Activated CD4-positive, alpha-beta T cell treated with anti-CD3 and anti-CD28 coated beads, Interleukin-2, amount 10 ng/mL, durations not matched to agents 24 days and 14 days (primary cell): ENCODE measurements at regions of chr2 and their contacts with region 1.

Region 1: DNA sequence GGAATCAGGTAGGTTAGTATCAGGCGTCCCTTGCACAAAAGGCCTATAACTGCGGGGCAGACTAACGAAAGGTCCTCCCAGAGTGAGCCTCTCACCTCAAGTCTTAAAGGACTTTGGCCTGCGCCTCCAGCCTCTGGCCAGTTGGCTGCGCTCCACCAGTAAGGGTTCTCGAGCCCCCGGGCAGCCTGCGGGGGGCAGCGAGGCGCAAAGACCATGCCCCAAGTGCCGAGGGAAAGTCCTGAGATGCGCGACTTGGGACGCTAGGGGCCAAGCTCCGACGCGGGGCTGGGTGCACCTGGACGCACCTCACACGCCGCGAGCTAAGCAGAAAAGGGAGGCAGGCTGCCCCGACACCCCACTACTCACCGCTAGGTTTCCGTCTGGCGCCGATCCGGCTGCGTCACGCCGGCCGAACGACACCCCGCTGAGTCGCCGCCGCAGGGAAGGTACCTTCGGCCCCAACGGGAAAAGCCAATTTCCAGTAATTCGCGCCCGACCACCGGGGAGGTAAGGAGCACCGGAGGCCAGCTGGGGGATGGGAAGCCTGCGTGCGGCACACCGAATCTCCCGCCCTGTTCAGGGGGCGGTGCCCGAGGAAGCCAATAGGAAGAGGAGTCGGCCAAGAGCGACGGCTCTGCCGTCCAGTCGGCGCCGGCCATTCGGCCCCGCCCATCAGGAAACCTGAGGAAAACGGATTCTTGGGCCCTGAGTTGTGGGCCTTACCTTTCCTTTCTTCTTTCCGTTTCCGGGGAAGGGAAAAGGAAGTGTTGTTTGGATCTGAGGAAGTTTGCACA is at the start of gene ORC2:
- DNase-seq: peak; percentile 99
- H3K4me3 Mint-ChIP-seq: peak within 1 kb of the TSS; percentile 90
- H3K27ac Mint-ChIP-seq: peak within 1 kb of the TSS; percentile 96
- H3K4me1 Mint-ChIP-seq: peaks cover 45% of the 10 kb centered on the region
- H3K27me3 Mint-ChIP-seq: no peaks in the 10 kb centered on the region
- total RNA-seq, gene ORC2: 64.2 and 66.5 TPM in 2 replicates

Region 2: GRCh38 chr2:200901459-200902072 is 61.8 kb before region 1 on chr2:
- intact Hi-C with region 1: loop called (anchors 2 kb)
- DNase-seq: peak; percentile 92
- H3K4me3 Mint-ChIP-seq: no peak overlapping the region
- H3K27ac Mint-ChIP-seq: peak overlapping the region; percentile 61
- H3K4me1 Mint-ChIP-seq: peaks cover 19% of the 10 kb centered on the region
- H3K27me3 Mint-ChIP-seq: no peaks in the 10 kb centered on the region

Region 3: DNA sequence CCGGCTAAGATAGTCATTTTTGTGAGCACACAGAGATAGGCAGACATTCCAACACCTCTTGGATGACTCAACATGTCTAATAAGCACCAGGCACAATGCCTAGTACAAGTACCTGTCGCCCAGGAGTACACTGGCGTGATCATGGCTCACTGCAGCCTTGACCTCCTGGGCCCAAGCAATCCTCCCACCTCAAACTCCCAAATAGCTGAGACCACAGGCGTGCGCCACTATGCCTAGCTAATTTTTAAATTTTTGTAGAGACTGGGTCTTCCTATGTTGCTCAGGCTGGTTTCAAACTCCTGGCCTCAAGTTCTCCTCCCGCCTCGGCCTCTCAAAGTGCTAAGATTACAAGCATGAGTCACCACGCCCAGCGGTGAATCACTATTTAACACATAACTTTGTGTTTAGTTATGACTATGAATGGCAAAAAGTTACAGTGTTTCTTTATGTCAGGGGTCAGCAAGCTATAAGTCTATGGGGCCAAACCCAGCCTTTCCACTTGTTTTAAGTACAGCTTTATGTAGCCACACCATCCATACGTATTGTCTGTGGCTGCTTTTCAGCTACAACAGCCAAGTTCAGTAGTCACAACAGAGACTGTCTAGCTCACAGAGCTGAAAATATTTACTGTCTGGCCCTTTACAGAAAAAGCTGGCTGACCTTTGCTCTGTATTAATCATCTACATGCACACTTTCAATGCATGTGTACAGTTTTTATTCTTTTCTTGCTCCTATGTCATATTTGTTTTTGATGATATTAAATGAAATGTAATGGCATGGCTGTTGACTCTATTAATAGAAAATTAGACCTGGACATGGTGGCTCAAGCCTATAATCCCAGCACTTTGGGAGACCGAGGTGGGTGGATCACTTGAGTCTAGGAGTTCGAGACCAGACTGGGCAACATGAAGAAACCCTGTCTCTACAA is 18.6 kb before region 1 on chr2:
- intact Hi-C with region 1: loop called (anchors 2 kb)
- DNase-seq: peak; percentile 67
- H3K4me3 Mint-ChIP-seq: no peak overlapping the region
- H3K27ac Mint-ChIP-seq: peak overlapping the region; percentile 78
- H3K4me1 Mint-ChIP-seq: peaks cover 20% of the 10 kb centered on the region
- H3K27me3 Mint-ChIP-seq: no peaks in the 10 kb centered on the region

Region 4: DNA sequence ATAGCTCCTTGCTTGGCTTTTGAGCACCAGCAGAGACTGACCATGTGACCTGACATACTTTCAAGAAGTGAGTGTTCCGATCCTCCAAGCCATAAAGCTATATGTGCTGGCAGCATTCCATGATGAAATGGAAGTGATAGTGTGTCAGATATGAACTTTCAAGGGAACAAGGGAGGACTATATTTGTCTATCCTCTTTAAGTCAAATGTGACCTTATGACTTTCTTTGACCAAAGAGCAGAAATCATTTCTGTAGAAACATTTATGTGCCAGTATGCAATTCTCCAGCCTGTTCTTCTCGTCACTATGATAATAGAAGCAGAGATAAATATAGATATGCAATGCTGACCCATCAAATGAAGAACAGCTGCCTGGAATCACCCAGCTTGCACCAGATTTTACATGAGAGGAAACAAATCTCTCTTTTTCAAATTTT is 93.8 kb after region 1 on chr2:
- intact Hi-C with region 1: no loop called
- DNase-seq: no peak
- H3K4me3 Mint-ChIP-seq: no peak overlapping the region
- H3K27ac Mint-ChIP-seq: no peak overlapping the region
- H3K4me1 Mint-ChIP-seq: peaks cover 17% of the 10 kb centered on the region
- H3K27me3 Mint-ChIP-seq: no peaks in the 10 kb centered on the region

Region 5: DNA sequence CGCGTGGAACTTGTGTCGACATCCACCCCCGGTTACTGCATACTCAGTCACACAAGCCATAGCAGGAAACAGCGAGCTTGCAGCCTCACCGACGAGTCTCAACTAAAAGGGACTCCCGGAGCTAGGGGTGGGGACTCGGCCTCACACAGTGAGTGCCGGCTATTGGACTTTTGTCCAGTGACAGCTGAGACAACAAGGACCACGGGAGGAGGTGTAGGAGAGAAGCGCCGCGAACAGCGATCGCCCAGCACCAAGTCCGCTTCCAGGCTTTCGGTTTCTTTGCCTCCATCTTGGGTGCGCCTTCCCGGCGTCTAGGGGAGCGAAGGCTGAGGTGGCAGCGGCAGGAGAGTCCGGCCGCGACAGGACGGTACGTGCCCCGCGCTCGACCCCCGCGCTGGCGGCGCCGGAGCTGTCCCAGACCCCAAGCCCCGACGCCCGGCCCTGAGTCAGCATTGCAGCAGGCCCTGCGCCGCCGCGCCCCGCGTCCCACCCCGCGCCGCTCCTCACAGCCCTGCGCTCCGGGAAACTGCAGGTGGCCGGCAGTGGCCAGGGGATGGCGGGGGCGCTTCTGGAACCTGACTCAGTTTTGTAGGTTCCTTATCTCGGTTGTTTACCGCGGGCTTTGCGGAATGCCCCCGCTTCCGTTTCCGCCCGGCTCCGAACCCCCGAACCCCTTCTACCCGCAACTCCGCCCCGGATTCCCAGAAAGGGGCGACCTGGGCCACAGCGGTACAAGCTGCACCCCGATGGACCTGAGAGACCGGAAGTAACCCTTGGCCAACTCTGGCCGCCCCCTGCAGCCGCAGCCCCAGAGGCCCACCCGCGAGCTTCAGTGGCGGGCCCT is 153.0 kb after region 1 on chr2 and contains the start of gene CFLAR:
- intact Hi-C with region 1: loop called (anchors 1 kb)
- DNase-seq: peak; percentile 96
- H3K4me3 Mint-ChIP-seq: peak within 1 kb of the TSS; percentile 96
- H3K27ac Mint-ChIP-seq: peak within 1 kb of the TSS; percentile 97
- H3K4me1 Mint-ChIP-seq: peaks cover 32% of the 10 kb centered on the region
- H3K27me3 Mint-ChIP-seq: no peaks in the 10 kb centered on the region
- total RNA-seq, gene CFLAR: 402 and 415 TPM in 2 replicates

Region 6: GRCh38 chr2:201158111-201158929 is 195.0 kb after region 1 on chr2:
- intact Hi-C with region 1: loop called (anchors 5 kb)
- DNase-seq: peak; percentile 89
- H3K4me3 Mint-ChIP-seq: peak overlapping the region; percentile 42
- H3K27ac Mint-ChIP-seq: peak overlapping the region; percentile 77
- H3K4me1 Mint-ChIP-seq: peaks cover 18% of the 10 kb centered on the region
- H3K27me3 Mint-ChIP-seq: no peaks in the 10 kb centered on the region